AG04450 (cell line): ENCODE measurements at regions of chr3 and their contacts with region 1.

Region 1: DNA sequence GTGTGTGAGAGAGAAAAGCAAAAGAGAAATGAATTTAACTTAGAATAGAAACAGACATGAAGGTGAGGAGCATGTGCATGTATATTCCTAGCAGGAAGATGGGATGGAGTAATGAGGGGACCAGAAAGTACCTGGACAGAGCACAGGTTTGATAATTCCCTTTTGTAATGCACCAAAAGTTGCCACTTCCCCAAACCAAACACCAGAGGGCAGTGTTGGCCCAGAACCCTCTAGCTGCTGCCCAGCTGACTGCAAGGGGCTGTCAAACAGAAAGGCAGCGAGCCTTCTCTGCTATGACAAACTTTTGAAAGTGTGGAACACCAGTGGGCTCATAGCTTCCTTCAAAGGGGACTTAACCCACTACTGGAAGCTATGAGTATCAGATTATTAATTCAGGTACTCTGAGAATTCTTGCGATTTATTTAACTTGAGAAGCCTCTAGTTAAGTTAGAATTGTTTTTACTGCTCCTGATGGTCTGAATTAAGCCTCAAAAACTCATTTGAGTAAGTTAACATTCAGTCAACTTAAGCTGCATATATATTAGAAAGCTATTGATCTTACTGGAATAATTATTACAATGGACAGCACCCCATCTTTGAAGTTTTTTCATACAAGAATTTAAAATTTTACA is 234.9 kb downstream of the NEK10 start:
- DNase-seq: peak; percentile 42
- H3K4me3 ChIP-seq: no peak overlapping the region
- H3K27ac ChIP-seq: no peak overlapping the region
- H3K27me3 ChIP-seq: no peaks in the 10 kb centered on the region
- CTCF ChIP-seq: peak; percentile 93

Region 2: GRCh38 chr3:27072810-27073651 is 61.2 kb before region 1 on chr3:
- CTCF ChIA-PET with region 1: no interaction called
- POLR2A ChIA-PET with region 1: no interaction called
- DNase-seq: no peak
- H3K4me3 ChIP-seq: no peak overlapping the region
- H3K27ac ChIP-seq: no peak overlapping the region
- H3K27me3 ChIP-seq: no peaks in the 10 kb centered on the region
- CTCF ChIP-seq: no peak

Region 3: GRCh38 chr3:27119639-27120038 is 14.6 kb before region 1 on chr3:
- CTCF ChIA-PET with region 1: interaction called, 30 read pairs
- POLR2A ChIA-PET with region 1: no interaction called
- DNase-seq: no peak
- H3K4me3 ChIP-seq: no peak overlapping the region
- H3K27ac ChIP-seq: no peak overlapping the region
- H3K27me3 ChIP-seq: no peaks in the 10 kb centered on the region
- CTCF ChIP-seq: no peak

Region 4: GRCh38 chr3:27166888-27167287 is 32.6 kb after region 1 on chr3:
- CTCF ChIA-PET with region 1: interaction called, 10 read pairs
- POLR2A ChIA-PET with region 1: no interaction called
- DNase-seq: peak; percentile 68
- H3K4me3 ChIP-seq: no peak overlapping the region
- H3K27ac ChIP-seq: no peak overlapping the region
- H3K27me3 ChIP-seq: no peaks in the 10 kb centered on the region
- CTCF ChIP-seq: no peak

Region 5: GRCh38 chr3:27279123-27279522 is 144.8 kb after region 1 on chr3:
- CTCF ChIA-PET with region 1: interaction called, 46 read pairs
- POLR2A ChIA-PET with region 1: no interaction called
- DNase-seq: no peak
- H3K4me3 ChIP-seq: no peak overlapping the region
- H3K27ac ChIP-seq: no peak overlapping the region
- H3K27me3 ChIP-seq: no peaks in the 10 kb centered on the region
- CTCF ChIP-seq: peak; percentile 38

Region 6: GRCh38 chr3:27467545-27467944 is 333.3 kb after region 1 on chr3:
- CTCF ChIA-PET with region 1: interaction called, 11 read pairs
- POLR2A ChIA-PET with region 1: no interaction called
- DNase-seq: no peak
- H3K4me3 ChIP-seq: no peak overlapping the region
- H3K27ac ChIP-seq: no peak overlapping the region
- H3K27me3 ChIP-seq: no peaks in the 10 kb centered on the region
- CTCF ChIP-seq: peak; percentile 65

Region 7: GRCh38 chr3:27585429-27585828 is 451.1 kb after region 1 on chr3:
- CTCF ChIA-PET with region 1: no interaction called
- POLR2A ChIA-PET with region 1: no interaction called
- DNase-seq: no peak
- H3K4me3 ChIP-seq: no peak overlapping the region
- H3K27ac ChIP-seq: no peak overlapping the region
- H3K27me3 ChIP-seq: no peaks in the 10 kb centered on the region
- CTCF ChIP-seq: no peak